ENCODE measurements at regions of chr2 and their contacts with region 1.

Region 1: GRCh38 chr2:218659258-218659987 is at the starts of genes BCS1L and ZNF142:
- DNase-seq: peak; percentile 90 to 94 (median 92)
- H3K4me3 ChIP-seq: peak within 1 kb of the TSS; percentile 50 to 78
- H3K4me3 Mint-ChIP-seq: peak within 1 kb of the TSS; percentile 91 to 100 (median 93)
- H3K27ac ChIP-seq: peak within 1 kb of the TSS; percentile 71
- H3K27ac Mint-ChIP-seq: peak within 1 kb of the TSS; percentile 92 to 98 (median 94)
- H3K4me1 ChIP-seq: peaks cover 28% of the 10 kb centered on the region
- H3K4me1 Mint-ChIP-seq: peaks cover 17 to 37% (median 31%) of the 10 kb centered on the region in 4 donors
- H3K27me3 ChIP-seq: no peaks in the 10 kb centered on the region
- H3K27me3 Mint-ChIP-seq: no peaks in the 10 kb centered on the region
- total RNA-seq, gene BCS1L: 53.0 to 57.2 TPM
- total RNA-seq, gene ZNF142: 44.4 to 54.5 TPM

Region 2: GRCh38 chr2:218529990-218530389 is 129.4 kb before region 1 on chr2:
- CTCF ChIA-PET with region 1: no interaction called
- POLR2A ChIA-PET with region 1: no interaction called
- intact Hi-C with region 1: no loop called
- DNase-seq: no peak
- H3K4me3 ChIP-seq: no peak overlapping the region
- H3K4me3 Mint-ChIP-seq: no peak overlapping the region
- H3K27ac ChIP-seq: no peak overlapping the region
- H3K27ac Mint-ChIP-seq: no peak overlapping the region
- H3K4me1 ChIP-seq: no peaks in the 10 kb centered on the region
- H3K4me1 Mint-ChIP-seq: no peaks in the 10 kb centered on the region
- H3K27me3 ChIP-seq: no peaks in the 10 kb centered on the region
- H3K27me3 Mint-ChIP-seq: no peaks in the 10 kb centered on the region

Region 3: GRCh38 chr2:218568190-218569037 is 91.0 kb before region 1 on chr2 and contains the starts of genes CNOT9 and USP37:
- CTCF ChIA-PET with region 1: interaction called, 5 read pairs
- POLR2A ChIA-PET with region 1: interaction called, 7 read pairs
- intact Hi-C with region 1: loop called (anchors 1 kb)
- DNase-seq: peak; percentile 99 to 100 (median 100)
- H3K4me3 ChIP-seq: peak within 1 kb of the TSS; percentile 67 to 84
- H3K4me3 Mint-ChIP-seq: peak within 1 kb of the TSS; percentile 90 to 99 (median 97)
- H3K27ac ChIP-seq: peak within 1 kb of the TSS; percentile 99
- H3K27ac Mint-ChIP-seq: peak within 1 kb of the TSS; percentile 96 to 100 (median 100)
- H3K4me1 ChIP-seq: peaks cover 43% of the 10 kb centered on the region
- H3K4me1 Mint-ChIP-seq: peaks cover 48 to 78% (median 57%) of the 10 kb centered on the region in 4 donors
- H3K27me3 ChIP-seq: no peaks in the 10 kb centered on the region
- H3K27me3 Mint-ChIP-seq: no peaks in the 10 kb centered on the region
- total RNA-seq, gene CNOT9: 53.9 to 58.0 TPM
- total RNA-seq, gene USP37: 28.2 to 29.1 TPM

Region 4: GRCh38 chr2:218671654-218672566 is 12.5 kb after region 1 on chr2 and contains the starts of genes RNF25 and STK36:
- CTCF ChIA-PET with region 1: interaction called, 51 read pairs
- POLR2A ChIA-PET with region 1: interaction called, 67 read pairs
- intact Hi-C with region 1: loop called (anchors 1 kb)
- DNase-seq: peak; percentile 78 to 88 (median 81)
- H3K4me3 ChIP-seq: peak within 1 kb of the TSS; percentile 77 to 97
- H3K4me3 Mint-ChIP-seq: peak within 1 kb of the TSS; percentile 95 to 98 (median 96)
- H3K27ac ChIP-seq: peak within 1 kb of the TSS; percentile 81
- H3K27ac Mint-ChIP-seq: peak within 1 kb of the TSS; percentile 89 to 98 (median 98)
- H3K4me1 ChIP-seq: peaks cover 18% of the 10 kb centered on the region
- H3K4me1 Mint-ChIP-seq: peaks cover 13 to 26% (median 19%) of the 10 kb centered on the region in 4 donors
- H3K27me3 ChIP-seq: no peaks in the 10 kb centered on the region
- H3K27me3 Mint-ChIP-seq: no peaks in the 10 kb centered on the region
- total RNA-seq, gene RNF25: 28.6 to 32.9 TPM
- total RNA-seq, gene STK36: 25.8 to 27.3 TPM

Region 5: DNA sequence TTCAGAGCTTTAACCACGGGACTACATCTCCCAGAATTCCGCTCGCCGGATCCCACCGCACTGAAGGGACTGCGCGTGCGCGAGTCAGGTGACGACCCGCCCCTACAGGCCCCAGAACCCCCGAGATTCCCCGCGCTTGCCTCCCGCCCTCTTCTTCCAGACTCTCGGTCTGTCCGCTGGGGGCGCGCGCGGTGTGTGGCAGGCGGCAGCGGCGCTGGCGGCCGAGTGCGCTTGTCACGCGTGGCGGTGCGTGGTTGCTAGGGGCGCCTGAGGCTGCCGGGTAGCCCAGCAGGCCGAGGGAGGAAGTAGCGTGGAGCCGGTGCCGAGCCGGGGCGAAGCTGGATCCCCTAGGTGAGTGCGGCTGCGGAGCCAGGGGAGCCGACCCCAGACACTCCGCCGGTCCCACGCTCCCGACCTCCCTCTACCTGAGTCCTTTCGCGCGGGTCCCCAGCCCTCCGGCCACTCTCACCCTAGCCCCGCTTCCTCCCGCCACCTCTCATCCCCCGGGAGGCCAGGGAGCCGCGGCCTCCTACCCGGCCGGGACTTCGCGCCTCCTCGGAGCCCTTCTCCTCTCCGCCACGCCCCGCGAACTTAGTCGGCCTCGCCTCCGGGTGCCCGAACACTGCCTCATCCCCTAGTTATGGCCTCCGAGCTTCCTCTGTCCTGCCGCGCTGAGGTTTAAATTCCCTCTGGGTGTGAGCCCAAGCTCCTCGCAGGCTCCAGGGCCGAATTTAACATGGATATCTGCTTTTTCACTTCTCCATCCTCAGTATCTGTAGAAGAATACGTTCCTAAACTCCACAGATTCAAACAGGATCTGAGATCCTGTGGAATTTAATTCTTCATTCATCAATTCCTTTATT is 51.5 kb after region 1 on chr2 and contains the start of gene TTLL4:
- CTCF ChIA-PET with region 1: interaction called, 28 read pairs
- POLR2A ChIA-PET with region 1: interaction called, 28 read pairs
- intact Hi-C with region 1: loop called (anchors 1 kb)
- DNase-seq: peak; percentile 98 to 99 (median 99)
- H3K4me3 ChIP-seq: peak within 1 kb of the TSS; percentile 55 to 78
- H3K4me3 Mint-ChIP-seq: peak within 1 kb of the TSS; percentile 88 to 98 (median 95)
- H3K27ac ChIP-seq: peak within 1 kb of the TSS; percentile 81
- H3K27ac Mint-ChIP-seq: peak within 1 kb of the TSS; percentile 79 to 96 (median 93)
- H3K4me1 ChIP-seq: peaks cover 16% of the 10 kb centered on the region
- H3K4me1 Mint-ChIP-seq: peaks cover 14 to 26% (median 18%) of the 10 kb centered on the region in 4 donors
- H3K27me3 ChIP-seq: no peaks in the 10 kb centered on the region
- H3K27me3 Mint-ChIP-seq: peaks cover 0 to under 1% of the 10 kb centered on the region in 2 donors
- total RNA-seq, gene TTLL4: 23.1 to 26.1 TPM

Measured in CD4-positive, alpha-beta memory T cell (primary cell).